Activated naive CD4-positive, alpha-beta T cell treated with anti-CD3 and anti-CD28 coated beads, Interleukin-2, amount 10 ng/mL, durations not matched to agents 7 days and 5 days (primary cell): ENCODE measurements at regions of chr6 and their contacts with region 1.

Region 1: GRCh38 chr6:10478187-10479040 is 42.7 kb upstream of the GCNT2 start:
- DNase-seq: no peak
- H3K4me3 Mint-ChIP-seq: no peak overlapping the region
- H3K27ac Mint-ChIP-seq: no peak overlapping the region
- H3K4me1 Mint-ChIP-seq: peaks cover 2% of the 10 kb centered on the region
- H3K27me3 Mint-ChIP-seq: peaks cover 12% of the 10 kb centered on the region

Region 2: GRCh38 chr6:10194816-10195639 is 283.4 kb before region 1 on chr6:
- CTCF ChIA-PET with region 1: no interaction called
- DNase-seq: no peak
- H3K4me3 Mint-ChIP-seq: no peak overlapping the region
- H3K27ac Mint-ChIP-seq: no peak overlapping the region
- H3K4me1 Mint-ChIP-seq: no peaks in the 10 kb centered on the region
- H3K27me3 Mint-ChIP-seq: no peaks in the 10 kb centered on the region

Region 3: DNA sequence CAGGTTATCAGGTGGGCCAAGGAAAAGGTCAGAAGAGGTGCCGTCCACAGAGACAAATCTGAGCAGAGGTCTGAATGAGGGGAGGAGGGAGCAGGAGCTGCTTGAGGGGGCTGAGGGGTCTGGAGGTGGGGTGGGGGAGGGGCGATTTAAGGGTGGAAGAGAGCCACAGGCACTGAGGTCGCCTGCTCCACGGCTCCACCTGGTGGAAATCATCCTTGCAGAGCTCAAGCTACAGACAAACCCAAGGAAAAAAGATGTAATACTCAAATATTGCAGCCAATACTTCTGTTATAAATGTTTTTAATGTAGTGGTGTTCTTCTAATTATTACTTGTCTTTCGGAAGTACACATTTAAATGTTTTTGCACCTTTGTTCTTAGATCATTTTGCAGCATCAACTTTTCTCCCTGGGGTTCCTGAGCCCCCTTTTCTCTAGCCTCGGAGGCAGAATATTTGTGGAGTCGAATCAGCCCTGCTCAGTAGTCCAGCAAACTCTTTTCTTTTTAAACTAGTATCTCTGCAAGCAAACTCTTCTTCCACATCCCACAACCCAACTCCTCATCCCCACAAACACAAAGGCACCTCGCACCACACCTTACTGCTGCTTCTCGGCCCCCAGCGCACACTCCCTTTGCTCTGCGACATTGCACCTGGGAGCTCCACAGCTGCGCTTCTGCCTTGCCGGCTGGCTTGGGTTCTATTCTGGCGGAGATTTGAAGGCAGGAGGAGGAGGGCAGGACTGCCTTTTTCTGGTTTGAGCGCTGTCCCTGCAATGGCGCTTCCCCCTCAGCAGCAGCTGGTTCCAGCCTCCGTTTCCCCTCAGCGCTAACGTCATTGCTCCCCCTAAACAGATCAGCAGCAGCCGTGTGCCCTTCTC is 12.5 kb before region 1 on chr6:
- CTCF ChIA-PET with region 1: interaction called, 11 read pairs
- DNase-seq: peak; percentile 50
- H3K4me3 Mint-ChIP-seq: no peak overlapping the region
- H3K27ac Mint-ChIP-seq: no peak overlapping the region
- H3K4me1 Mint-ChIP-seq: no peaks in the 10 kb centered on the region
- H3K27me3 Mint-ChIP-seq: peaks cover 9% of the 10 kb centered on the region

Region 4: DNA sequence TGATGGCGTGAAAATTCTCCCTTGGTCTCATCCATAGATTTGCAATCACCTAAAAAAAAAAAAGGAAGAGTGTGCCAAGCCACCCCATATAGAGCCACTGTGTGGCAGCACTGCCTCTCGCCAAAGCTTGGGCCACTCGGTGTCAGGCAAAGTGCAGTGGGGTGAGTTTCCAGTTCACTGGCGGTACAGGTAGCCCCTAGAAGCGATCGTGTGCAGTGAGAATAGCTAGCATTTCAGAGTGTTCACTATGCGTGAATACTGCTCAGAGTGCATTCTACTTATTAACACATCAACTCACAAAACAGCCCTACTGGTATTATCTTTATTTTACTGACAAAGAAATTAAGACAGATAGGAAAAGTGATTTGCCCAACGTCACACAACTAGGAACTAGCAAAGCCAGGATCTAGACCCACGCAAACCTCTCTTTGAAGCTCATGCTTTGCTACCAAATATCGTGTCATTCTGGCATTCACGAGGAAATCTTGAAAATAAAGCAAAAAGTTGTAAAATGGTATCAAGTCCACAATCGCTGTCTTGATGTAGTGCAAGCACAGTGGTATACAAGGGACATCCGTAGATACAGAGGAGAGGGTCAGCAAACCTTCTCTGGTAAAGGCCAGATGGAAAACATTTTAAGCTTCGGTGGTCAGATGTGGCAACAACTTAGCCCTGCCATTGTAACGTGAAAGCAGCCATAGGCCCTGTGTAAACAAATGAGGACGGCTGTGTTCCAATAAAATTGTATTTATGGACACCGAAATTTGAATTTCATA is 32.4 kb after region 1 on chr6:
- CTCF ChIA-PET with region 1: interaction called, 10 read pairs
- DNase-seq: peak; percentile 70
- H3K4me3 Mint-ChIP-seq: no peak overlapping the region
- H3K27ac Mint-ChIP-seq: no peak overlapping the region
- H3K4me1 Mint-ChIP-seq: peaks cover 3% of the 10 kb centered on the region
- H3K27me3 Mint-ChIP-seq: peaks cover 20% of the 10 kb centered on the region

Region 5: DNA sequence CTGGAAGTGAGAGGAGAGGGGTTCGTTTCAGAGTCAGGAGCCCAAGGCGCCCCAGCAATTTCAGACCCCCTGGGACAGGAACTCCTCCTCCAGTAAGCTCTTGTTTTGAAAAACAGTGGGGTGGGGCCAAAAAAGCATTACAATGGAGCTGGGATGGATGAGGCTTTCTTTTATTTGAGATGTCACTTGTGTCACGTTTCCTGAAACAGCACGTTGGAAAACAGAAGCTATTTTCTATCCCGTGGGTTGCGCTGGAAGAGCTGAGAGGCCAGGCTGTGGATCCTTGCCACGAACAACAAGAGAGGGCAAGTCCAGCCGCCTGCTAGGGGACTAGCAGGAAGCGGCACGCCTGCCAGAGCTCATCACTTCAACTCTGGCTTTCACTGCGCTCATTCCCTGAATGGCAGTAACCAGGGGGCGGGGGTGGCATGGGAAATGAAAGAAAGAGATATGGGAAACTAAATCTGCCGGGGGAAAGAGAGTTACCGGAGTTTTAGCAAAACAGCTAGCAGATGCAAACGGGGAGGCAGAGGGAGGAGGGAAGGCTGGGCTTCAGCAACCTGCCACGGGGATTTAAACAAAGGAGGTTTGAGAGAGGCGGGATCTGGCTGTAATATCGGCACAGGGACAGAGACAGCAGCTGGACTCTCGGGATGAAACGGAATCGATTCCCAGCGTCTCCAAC is 77.4 kb after region 1 on chr6:
- CTCF ChIA-PET with region 1: no interaction called
- DNase-seq: no peak
- H3K4me3 Mint-ChIP-seq: no peak overlapping the region
- H3K27ac Mint-ChIP-seq: no peak overlapping the region
- H3K4me1 Mint-ChIP-seq: no peaks in the 10 kb centered on the region
- H3K27me3 Mint-ChIP-seq: no peaks in the 10 kb centered on the region

Region 6: DNA sequence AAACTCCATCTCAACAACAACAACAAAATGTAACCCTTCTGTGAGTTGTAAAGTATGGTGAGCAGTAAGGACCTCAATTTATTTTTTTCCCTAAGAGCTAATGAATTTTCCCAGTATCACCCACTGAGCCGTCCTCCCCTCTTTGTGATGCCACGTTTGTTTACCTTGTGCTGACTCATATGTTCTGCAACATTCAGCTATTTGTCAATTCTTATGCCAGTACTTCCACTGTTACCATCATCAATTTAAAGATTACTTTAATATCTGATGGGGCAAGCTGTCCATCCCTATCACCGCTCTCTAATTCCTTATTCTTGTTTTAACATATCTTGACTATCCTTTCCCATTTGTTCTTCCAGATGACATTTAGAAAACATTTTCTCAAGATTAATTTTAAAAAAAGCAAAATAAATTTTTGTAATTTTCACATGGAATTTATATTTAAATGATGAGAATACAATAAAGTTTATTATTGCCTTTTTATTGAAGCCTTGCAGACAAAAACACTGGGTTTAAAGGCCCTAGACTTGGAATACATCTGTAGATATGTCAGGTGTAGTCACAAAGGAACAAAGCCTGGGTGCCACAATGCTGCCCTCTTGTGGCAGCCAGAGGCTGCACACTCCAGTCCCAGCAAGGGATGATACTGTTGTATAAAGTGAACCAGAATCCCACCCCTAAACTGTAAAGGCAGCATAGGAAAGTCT is 322.6 kb after region 1 on chr6:
- CTCF ChIA-PET with region 1: interaction called, 60 read pairs
- DNase-seq: peak; percentile 75
- H3K4me3 Mint-ChIP-seq: no peak overlapping the region
- H3K27ac Mint-ChIP-seq: no peak overlapping the region
- H3K4me1 Mint-ChIP-seq: no peaks in the 10 kb centered on the region
- H3K27me3 Mint-ChIP-seq: no peaks in the 10 kb centered on the region

Region 7: GRCh38 chr6:11064836-11065235 is 586.4 kb after region 1 on chr6:
- CTCF ChIA-PET with region 1: interaction called, 12 read pairs
- DNase-seq: no peak
- H3K4me3 Mint-ChIP-seq: no peak overlapping the region
- H3K27ac Mint-ChIP-seq: no peak overlapping the region
- H3K4me1 Mint-ChIP-seq: no peaks in the 10 kb centered on the region
- H3K27me3 Mint-ChIP-seq: peaks cover 7% of the 10 kb centered on the region